ENCODE measurements at regions of chr17 and their contacts with region 1.

Region 1: GRCh38 chr17:64975329-64976087 is 56.2 kb upstream of the LRRC37A3 start:
- DNase-seq: peak; percentile 94

Region 2: GRCh38 chr17:64964796-64965195 is 10.7 kb before region 1 on chr17:
- CTCF ChIA-PET with region 1: no interaction called
- POLR2A ChIA-PET with region 1: interaction called, 14 read pairs
- DNase-seq: no peak

Region 3: GRCh38 chr17:65056262-65056638 is 80.7 kb after region 1 on chr17:
- CTCF ChIA-PET with region 1: no interaction called
- POLR2A ChIA-PET with region 1: interaction called, 12 read pairs
- DNase-seq: no peak

Measured in HEK293T (cell line).